K562 (cell line): ENCODE measurements at regions of chr14 and their contacts with region 1.

Region 1: GRCh38 chr14:101359221-101360053 is 201.9 kb upstream of the DIO3 start:
- DNase-seq: peak in 1 of 4 experiments; percentile 20
- ATAC-seq: peak; percentile 17; the same call in 1 of the 3 replicates
- H3K4me3 ChIP-seq: no peak overlapping the region
- H3K27ac ChIP-seq: no peak overlapping the region; the same call in 2 of the 3 replicates
- H3K4me1 ChIP-seq: peaks cover 24 to 25% of the 10 kb centered on the region in 2 experiments; a peak in 4 of 5 replicates
- H3K27me3 ChIP-seq: peaks cover 0 to 10% of the 10 kb centered on the region in 2 experiments; a peak in 2 of 5 replicates
- CTCF ChIP-seq: no peak
- EP300 ChIP-seq: no peak
- POLR2A ChIP-seq: no peak
- RAD21 ChIP-seq: no peak

Region 2: GRCh38 chr14:101628471-101628966 is 269.1 kb after region 1 on chr14:
- CTCF ChIA-PET with region 1: no interaction called
- POLR2A ChIA-PET with region 1: no interaction called
- in situ Hi-C with region 1: no loop called
- intact Hi-C with region 1: loop called (anchors 5 kb)
- DNase-seq: peak; percentile 81 to 84 (median 82)
- ATAC-seq: peak; percentile 92
- H3K4me3 ChIP-seq: no peak overlapping the region
- H3K27ac ChIP-seq: peak overlapping the region; percentile 50; the same call in 2 of the 3 replicates
- H3K4me1 ChIP-seq: peaks cover 6 to 34% of the 10 kb centered on the region in 2 experiments; a peak in 4 of 5 replicates
- H3K27me3 ChIP-seq: no peaks in the 10 kb centered on the region
- CTCF ChIP-seq: peak; percentile 83 to 85 (median 85)
- EP300 ChIP-seq: peak; percentile 46
- POLR2A ChIP-seq: no peak
- RAD21 ChIP-seq: peak; percentile 85 to 91

Region 3: GRCh38 chr14:101743701-101744100 is 384.3 kb after region 1 on chr14:
- CTCF ChIA-PET with region 1: no interaction called
- POLR2A ChIA-PET with region 1: no interaction called
- in situ Hi-C with region 1: no loop called
- intact Hi-C with region 1: no loop called
- DNase-seq: no peak
- ATAC-seq: no peak
- H3K4me3 ChIP-seq: no peak overlapping the region
- H3K27ac ChIP-seq: no peak overlapping the region
- H3K4me1 ChIP-seq: no peaks in the 10 kb centered on the region; a peak in 1 of 5 replicates
- H3K27me3 ChIP-seq: no peaks in the 10 kb centered on the region
- CTCF ChIP-seq: no peak
- EP300 ChIP-seq: no peak
- POLR2A ChIP-seq: no peak
- RAD21 ChIP-seq: no peak